HCT116 (cell line): ENCODE measurements at regions of chr1 and their contacts with region 1.

Region 1: DNA sequence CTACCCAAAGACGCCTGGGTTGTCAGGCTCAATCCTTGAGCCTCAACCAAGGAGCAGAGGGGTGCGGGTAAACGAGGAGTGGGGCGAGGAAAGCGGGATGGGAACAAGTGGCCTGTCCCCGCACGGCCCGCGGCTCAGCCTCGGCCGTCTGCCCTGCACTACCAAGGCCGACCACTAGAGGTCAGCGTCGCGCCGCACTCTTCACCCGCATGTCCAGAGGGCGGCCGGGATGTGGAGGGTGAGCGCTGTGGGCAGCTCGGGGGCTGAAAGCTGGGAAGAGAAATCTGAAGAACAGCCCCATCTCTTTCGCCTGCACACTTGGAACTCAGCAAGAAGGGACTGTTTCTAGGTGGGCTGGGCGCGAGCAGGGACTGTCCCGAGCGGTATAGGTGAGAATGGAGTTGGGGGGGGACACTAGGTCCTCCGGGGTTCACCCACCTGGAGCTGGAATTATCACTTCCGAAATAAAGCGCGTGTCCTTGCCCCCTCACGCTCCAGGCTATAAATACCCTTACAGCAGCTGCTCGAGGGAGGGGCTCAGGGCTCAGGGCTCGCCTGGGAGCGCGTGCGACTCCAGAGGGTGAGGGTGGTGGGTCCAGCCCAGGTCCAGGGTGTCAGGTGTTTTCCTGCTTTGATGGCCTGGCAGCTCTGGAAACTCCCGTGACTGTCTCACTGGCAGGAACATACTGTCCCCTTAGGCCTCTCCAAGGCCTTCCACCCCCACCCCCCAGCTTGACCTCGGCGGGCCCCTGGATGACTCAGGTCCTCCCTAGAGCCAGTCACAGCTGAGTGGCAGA is 9.8 kb downstream of the SLC30A2 start:
- DNase-seq: peak; percentile 26
- ATAC-seq: peak; percentile 85
- H3K4me3 ChIP-seq: peak overlapping the region; percentile 91 to 98
- H3K27ac ChIP-seq: peak overlapping the region; percentile 73; the same call in 1 of the 2 replicates
- H3K4me1 ChIP-seq: peaks cover 11 to 27% of the 10 kb centered on the region in 2 experiments
- H3K27me3 ChIP-seq: no peaks in the 10 kb centered on the region
- CTCF ChIP-seq: peak; percentile 86 to 98 (median 96)
- POLR2A ChIP-seq: no peak
- RAD21 ChIP-seq: peak; percentile 95

Region 2: DNA sequence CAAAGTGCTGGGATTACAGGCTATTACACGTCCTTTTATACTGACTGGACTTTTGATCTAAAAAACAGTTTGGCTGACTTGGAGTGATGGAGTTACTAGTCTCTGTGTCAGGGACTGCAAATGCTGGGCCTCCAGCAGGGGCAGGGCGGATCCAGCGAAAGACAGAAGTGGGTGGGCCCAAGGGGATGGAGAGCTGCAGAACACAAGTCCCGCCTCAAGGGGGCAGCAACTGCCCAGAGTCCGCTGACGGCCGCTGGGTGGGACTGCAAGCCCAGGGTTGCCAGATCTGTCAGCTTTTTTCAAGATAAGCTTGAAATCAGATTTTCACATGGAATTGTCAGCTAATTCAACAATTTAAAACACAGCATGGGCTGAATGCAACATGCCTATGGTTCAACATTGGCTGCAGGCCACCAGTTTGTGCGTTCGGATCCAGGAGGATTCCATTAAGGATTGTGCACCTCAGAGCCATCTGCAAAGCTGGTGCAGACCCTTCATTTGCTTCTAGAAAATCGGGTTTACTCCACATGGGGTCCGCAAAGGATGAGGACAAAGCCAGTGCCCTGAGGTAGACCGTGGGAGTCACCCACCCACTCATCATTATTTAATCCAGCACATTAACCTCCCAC is 140.7 kb before region 1 on chr1:
- CTCF ChIA-PET with region 1: interaction called, 20 read pairs
- POLR2A ChIA-PET with region 1: no interaction called
- RAD21 ChIA-PET with region 1: no interaction called
- intact Hi-C with region 1: no loop called
- DNase-seq: peak; percentile 73
- ATAC-seq: peak; percentile 70
- H3K4me3 ChIP-seq: no peak overlapping the region
- H3K27ac ChIP-seq: peak overlapping the region; percentile 24
- H3K4me1 ChIP-seq: peaks cover 44 to 61% of the 10 kb centered on the region in 2 experiments
- H3K27me3 ChIP-seq: no peaks in the 10 kb centered on the region
- CTCF ChIP-seq: peak; percentile 97 to 99 (median 98)
- POLR2A ChIP-seq: no peak
- RAD21 ChIP-seq: peak; percentile 97

Region 3: DNA sequence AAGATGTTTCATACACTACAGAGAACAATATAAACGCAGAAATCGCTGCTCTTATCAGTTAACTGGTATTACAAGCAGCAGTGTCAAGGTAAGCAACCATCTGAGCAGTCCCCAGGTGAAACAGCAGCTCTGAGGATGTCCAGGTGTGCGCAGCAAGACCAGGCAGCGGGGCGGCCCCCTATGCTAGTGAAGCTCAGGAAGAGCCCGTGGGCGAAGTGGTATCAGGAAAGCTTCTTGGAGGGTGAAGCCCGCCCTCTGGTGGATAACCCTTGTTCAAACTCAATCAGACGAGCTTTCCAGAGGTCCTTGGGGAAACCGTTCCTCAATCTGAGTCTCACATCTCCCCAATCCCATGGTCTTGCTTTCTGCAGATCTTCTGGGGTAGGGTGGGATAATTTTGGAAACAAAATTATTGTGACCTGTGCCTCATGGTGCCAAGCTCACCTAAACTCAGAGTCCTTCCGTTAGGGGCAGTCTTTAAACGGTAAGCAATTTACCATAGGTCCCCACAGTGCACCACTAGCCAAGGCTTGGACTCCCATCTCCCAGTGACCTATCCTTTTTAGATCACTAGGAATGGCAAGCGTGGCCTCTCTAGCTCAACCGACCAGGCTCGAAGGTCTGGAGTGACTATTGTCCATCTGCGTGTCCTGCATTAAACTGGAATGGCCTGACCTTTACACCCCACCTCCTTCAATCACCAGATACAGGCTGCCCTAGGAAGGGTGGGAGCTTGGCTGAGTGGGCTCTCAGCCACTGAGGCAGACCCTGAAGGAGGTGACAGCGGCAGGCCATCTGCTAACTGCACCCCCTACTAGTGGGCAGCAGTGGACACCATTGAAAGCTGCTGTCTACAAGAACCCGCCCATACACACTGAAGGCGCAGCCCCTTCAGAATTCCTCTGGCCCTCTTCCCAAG is 109.1 kb after region 1 on chr1:
- CTCF ChIA-PET with region 1: interaction called, 60 read pairs
- POLR2A ChIA-PET with region 1: interaction called, 5 read pairs
- RAD21 ChIA-PET with region 1: interaction called, 6 to 12 read pairs
- intact Hi-C with region 1: loop called (anchors 1 kb)
- DNase-seq: peak; percentile 89
- ATAC-seq: peak; percentile 93
- H3K4me3 ChIP-seq: no peak overlapping the region
- H3K27ac ChIP-seq: no peak overlapping the region
- H3K4me1 ChIP-seq: peaks cover 14 to 28% of the 10 kb centered on the region in 2 experiments
- H3K27me3 ChIP-seq: no peaks in the 10 kb centered on the region
- CTCF ChIP-seq: peak; percentile 71 to 95 (median 72)
- POLR2A ChIP-seq: no peak
- RAD21 ChIP-seq: peak; percentile 97

Region 4: DNA sequence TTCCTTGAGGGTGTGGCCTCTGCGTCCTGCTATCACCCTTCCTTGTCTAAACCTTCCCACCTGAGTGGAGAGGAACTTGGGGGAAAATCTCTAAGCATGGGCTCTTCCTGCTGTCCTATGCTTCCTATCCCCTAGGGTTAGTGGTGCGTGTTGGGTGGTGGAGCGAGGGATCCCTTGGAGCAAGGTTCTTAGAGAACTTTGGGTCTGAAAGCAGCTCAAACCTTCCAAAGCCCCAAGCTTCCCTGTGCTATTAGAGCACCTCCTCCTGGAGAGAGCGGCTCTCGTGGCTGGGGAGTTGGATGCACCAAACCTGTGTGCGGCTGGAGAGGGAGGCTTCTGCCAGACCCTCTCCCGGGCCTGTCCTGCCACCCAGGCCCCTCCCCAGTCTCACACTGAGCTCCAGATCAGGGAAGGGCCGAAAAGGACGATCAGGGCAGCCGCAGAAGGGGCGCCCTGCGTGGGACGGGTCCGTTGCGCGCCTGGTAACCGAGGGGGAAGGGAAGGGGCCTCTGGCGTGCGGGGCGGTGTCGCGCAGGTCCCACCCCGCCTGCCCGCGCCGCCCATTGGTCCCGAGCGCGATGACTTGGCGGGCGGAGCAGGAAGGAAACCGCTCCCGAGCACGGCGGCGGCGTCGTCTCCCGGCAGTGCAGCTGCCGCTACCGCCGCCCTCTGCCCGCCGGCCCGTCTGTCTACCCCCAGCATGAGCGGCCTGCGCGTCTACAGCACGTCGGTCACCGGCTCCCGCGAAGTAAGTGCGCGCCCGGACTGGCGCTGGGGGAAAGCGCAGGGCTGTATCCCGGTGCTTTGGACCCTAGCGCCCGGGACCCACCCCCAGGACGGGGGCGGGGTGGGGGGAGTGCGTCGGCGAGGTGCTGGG is 243.5 kb after region 1 on chr1 and contains the start of gene SH3BGRL3:
- CTCF ChIA-PET with region 1: interaction called, 6 read pairs
- POLR2A ChIA-PET with region 1: no interaction called
- RAD21 ChIA-PET with region 1: no interaction called
- intact Hi-C with region 1: loop called (anchors 5 kb)
- DNase-seq: peak; percentile 57
- ATAC-seq: peak; percentile 79
- H3K4me3 ChIP-seq: peak within 1 kb of the TSS; percentile 74 to 76
- H3K27ac ChIP-seq: peak within 1 kb of the TSS; percentile 81
- H3K4me1 ChIP-seq: peaks cover 41 to 95% of the 10 kb centered on the region in 2 experiments
- H3K27me3 ChIP-seq: no peaks in the 10 kb centered on the region
- CTCF ChIP-seq: peak in 2 of 3 experiments; percentile 70 to 77; a peak in 4 of 6 replicates
- POLR2A ChIP-seq: peak; percentile 68
- RAD21 ChIP-seq: no peak
- total RNA-seq, gene SH3BGRL3: 112 TPM

Region 5: GRCh38 chr1:26417111-26417759 is 381.1 kb after region 1 on chr1:
- CTCF ChIA-PET with region 1: interaction called, 12 read pairs
- POLR2A ChIA-PET with region 1: no interaction called
- RAD21 ChIA-PET with region 1: no interaction called
- intact Hi-C with region 1: no loop called
- DNase-seq: peak; percentile 80
- ATAC-seq: peak; percentile 100
- H3K4me3 ChIP-seq: no peak overlapping the region
- H3K27ac ChIP-seq: no peak overlapping the region
- H3K4me1 ChIP-seq: peaks cover 0 to 19% of the 10 kb centered on the region in 2 experiments; a peak in 2 of 4 replicates
- H3K27me3 ChIP-seq: no peaks in the 10 kb centered on the region; the same call in 1 of the 2 replicates
- CTCF ChIP-seq: peak; percentile 76 to 95 (median 89)
- POLR2A ChIP-seq: no peak
- RAD21 ChIP-seq: peak; percentile 84